ENCODE measurements at regions of chr18 and their contacts with region 1.

Region 1: DNA sequence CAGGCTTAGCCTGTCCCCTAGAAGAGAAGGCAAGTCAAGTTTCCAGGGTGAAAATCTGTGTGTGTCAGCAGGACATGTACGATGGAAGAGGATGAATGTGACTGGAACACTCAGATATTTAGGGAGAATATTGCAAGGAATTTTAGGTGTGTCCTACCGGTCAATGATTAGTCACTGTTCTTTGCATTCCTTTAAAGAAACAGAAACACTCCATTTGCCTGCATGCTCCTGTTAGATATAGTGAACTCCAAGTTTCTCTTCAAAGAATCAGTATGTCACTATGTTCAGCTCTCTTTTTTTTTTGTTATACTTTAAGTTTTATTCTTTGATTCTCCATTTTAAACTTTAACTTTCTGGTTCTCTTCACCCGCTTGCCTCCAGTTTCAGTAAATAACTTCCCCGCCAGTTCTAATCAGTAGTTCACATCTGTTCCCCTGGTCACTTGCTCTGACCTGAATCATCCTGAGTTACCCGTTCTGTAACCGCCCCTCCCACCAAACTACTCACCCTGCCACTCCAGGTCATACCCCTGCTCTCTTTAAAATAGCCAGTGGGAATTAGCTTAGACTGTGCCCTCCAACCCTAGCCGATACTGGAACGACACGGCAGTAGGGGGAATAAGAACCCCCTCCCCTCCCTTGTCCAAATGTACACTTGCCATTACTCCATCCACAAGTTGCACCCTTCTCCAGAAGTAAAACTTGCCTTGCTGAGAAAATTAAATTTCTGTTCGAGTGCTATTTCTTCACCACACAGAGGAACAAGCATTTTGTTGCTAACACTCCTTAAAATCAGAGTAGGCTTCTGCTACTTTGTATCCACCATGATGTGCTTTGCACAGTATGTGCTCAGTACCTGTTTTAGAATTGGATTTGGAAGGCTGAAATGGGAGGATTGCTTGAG is 268.4 kb downstream of the METTL4 start:
- DNase-seq: peak; percentile 57
- H3K4me3 Mint-ChIP-seq: peak overlapping the region; percentile 58
- H3K27ac Mint-ChIP-seq: peak overlapping the region; percentile 87
- H3K4me1 Mint-ChIP-seq: peaks cover 57% of the 10 kb centered on the region
- H3K27me3 Mint-ChIP-seq: no peaks in the 10 kb centered on the region
- CTCF ChIP-seq: no peak

Region 2: GRCh38 chr18:2104620-2105462 is 198.0 kb before region 1 on chr18:
- CTCF ChIA-PET with region 1: no interaction called
- intact Hi-C with region 1: loop called (anchors 10 kb)
- DNase-seq: peak; percentile 71
- H3K4me3 Mint-ChIP-seq: no peak overlapping the region
- H3K27ac Mint-ChIP-seq: no peak overlapping the region
- H3K4me1 Mint-ChIP-seq: no peaks in the 10 kb centered on the region
- H3K27me3 Mint-ChIP-seq: no peaks in the 10 kb centered on the region
- CTCF ChIP-seq: peak; percentile 83

Region 3: GRCh38 chr18:2180586-2180985 is 122.3 kb before region 1 on chr18:
- CTCF ChIA-PET with region 1: no interaction called
- intact Hi-C with region 1: loop called (anchors 10 kb)
- DNase-seq: peak; percentile 58
- H3K4me3 Mint-ChIP-seq: no peak overlapping the region
- H3K27ac Mint-ChIP-seq: peak overlapping the region; percentile 71
- H3K4me1 Mint-ChIP-seq: peaks cover 15% of the 10 kb centered on the region
- H3K27me3 Mint-ChIP-seq: no peaks in the 10 kb centered on the region
- CTCF ChIP-seq: no peak

Measured in Calu3 (cell line).